ENCODE measurements at regions of chr12 and their contacts with region 1.

Region 1: DNA sequence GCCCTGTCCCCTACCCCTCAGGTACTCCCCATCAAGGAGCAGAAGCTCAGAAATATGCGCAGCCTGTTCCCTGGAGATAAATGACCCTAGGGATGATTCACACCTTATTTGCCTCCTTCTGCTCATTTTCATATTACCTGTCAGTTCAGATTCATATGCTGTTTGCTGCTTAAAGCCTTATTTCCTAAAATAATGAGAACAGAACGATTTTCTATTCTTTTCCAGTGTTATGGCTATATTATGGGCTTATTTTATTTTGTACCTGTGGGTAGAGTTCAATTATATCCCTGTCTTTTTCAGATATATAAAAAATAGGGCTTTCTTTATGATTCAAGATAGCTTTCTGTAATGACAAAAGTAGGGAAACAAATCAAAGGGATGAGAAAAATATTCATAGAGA is 224.8 kb downstream of the RPAP3 start:
- DNase-seq: no peak
- H3K4me3 Mint-ChIP-seq: no peak overlapping the region
- H3K27ac Mint-ChIP-seq: no peak overlapping the region
- H3K4me1 Mint-ChIP-seq: no peaks in the 10 kb centered on the region
- H3K27me3 Mint-ChIP-seq: peaks cover 5% of the 10 kb centered on the region

Region 2: DNA sequence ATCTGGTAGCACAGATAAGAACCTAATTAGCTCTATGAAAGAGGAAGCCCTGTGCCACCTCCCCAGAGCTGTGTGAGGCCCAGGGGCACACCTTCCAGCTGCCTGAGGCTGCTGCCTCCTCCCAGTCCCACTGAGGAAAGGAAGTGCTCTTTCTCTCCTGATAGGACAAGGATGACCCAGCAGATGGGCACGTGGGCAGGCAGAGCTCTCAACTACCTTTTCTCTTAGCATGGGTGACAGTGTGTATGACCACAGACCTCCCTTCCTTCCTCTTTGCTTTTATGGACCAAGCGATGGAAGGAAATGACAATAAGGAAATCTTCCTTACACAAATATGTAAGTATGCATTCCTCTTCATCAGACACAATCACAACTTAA is 273.7 kb before region 1 on chr12:
- intact Hi-C with region 1: no loop called
- DNase-seq: peak; percentile 80
- H3K4me3 Mint-ChIP-seq: peak overlapping the region; percentile 79
- H3K27ac Mint-ChIP-seq: peak overlapping the region; percentile 18
- H3K4me1 Mint-ChIP-seq: peaks cover 63% of the 10 kb centered on the region
- H3K27me3 Mint-ChIP-seq: no peaks in the 10 kb centered on the region

Region 3: DNA sequence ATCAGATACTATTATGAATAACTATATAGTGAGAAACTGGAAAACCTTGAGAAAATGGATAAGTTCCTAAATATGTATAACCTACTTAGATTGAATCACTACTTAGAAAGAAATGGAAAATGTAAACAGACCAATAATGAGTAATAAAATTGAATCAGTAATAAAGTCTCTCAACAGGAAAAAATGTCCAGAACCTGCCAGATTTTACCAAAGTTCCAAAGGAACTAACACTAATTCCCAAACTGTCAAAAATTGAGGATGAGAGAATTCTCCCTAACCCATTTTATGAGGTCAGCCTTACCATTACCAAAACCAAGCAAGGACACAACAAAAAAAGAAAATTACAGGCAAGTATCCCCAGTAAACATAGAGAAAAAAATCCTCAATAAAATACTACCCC is 47.2 kb before region 1 on chr12:
- intact Hi-C with region 1: loop called (anchors 1 kb)
- DNase-seq: no peak
- H3K4me3 Mint-ChIP-seq: no peak overlapping the region
- H3K27ac Mint-ChIP-seq: no peak overlapping the region
- H3K4me1 Mint-ChIP-seq: no peaks in the 10 kb centered on the region
- H3K27me3 Mint-ChIP-seq: peaks cover 2% of the 10 kb centered on the region

Measured in activated CD4-positive, alpha-beta T cell treated with anti-CD3 and anti-CD28 coated beads, Interleukin-2, amount 10 ng/mL, durations not matched to agents 24 days and 14 days (primary cell).